ENCODE measurements at regions of chr5 and their contacts with region 1.

Region 1: DNA sequence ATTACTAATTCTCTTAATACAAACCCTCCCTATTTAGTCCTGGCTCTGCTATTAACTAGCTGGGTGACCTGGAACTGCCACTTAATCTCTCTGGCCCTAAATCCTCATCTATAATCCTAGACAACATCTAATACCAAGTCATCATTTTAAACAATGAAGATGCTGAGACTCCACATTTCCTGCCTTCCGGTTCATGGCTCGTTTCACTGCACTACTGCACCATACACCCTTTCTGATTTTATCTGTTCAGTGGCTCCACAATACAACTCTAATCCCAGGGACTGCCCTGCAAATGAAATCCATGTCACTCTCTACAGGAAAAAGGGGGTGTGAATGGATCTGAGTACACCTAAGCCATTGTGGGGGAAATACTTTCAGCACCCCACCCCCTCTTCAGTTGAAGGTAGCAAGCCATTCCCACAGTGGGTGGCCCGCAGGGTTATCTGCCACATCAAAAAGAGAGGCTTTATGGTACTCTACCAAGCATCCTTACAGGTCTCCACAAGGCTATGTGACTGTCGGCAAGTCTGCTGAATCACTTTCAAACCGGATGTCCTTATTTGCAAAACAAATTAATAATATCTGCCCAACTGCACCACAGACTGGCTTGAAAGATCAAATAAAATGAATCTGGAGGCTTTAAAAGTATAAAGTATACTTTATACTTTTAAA is 89.5 kb downstream of the EPB41L4A start:
- DNase-seq: no peak
- ATAC-seq: no peak

Region 2: DNA sequence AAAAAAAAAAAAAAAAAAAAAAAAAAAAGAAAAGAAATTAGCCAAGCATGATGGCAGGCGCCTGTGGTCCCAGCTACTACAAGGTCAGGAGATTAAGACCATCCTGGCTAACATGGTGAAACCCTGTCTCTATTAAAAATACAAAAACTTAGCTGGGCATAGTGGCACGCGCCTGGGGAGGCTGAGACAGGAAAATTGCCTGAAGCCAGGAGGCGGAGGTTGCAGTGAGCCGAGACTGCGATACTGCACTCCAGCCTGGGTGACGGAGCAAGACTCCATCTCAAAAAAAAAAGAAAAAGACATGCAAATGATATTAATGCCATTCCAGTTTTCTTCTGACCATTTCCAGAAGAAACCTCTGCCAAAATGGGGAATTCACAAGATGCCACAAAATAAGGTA is 15.0 kb before region 1 on chr5:
- intact Hi-C with region 1: loop called (anchors 2 kb)
- DNase-seq: no peak
- ATAC-seq: no peak

Region 3: GRCh38 chr5:112372539-112372938 is 43.0 kb after region 1 on chr5:
- intact Hi-C with region 1: loop called (anchors 5 kb)
- DNase-seq: no peak
- ATAC-seq: no peak

Measured in Right ventricle myocardium inferior (tissue), 1 donor.